GM13976 (cell line): ENCODE measurements at regions of chr6 and their contacts with region 1.

Region 1: DNA sequence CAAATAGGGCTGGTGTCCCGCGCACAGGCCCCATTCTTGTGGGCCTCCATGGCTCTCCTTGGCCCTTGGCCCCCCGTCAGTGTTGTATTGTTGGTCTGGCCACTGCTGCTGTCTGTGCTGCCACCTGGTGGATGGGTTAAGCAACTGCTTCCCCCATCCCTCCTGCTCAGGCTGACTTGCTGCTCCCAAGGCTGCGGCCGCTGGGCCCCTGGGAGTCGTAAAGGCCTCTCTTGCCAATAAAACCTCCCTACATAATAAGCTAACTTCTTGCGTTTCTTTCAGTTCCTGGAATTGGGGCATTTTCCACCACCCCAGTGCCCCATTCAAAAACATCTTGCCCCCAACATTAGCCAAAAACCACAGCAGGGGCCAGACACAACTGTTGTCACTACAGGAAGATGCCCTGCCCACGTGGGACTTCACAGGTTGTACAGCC is 27.1 kb downstream of the CD83 start:
- DNase-seq: peak; percentile 87
- CTCF ChIP-seq: peak; percentile 92

Region 2: DNA sequence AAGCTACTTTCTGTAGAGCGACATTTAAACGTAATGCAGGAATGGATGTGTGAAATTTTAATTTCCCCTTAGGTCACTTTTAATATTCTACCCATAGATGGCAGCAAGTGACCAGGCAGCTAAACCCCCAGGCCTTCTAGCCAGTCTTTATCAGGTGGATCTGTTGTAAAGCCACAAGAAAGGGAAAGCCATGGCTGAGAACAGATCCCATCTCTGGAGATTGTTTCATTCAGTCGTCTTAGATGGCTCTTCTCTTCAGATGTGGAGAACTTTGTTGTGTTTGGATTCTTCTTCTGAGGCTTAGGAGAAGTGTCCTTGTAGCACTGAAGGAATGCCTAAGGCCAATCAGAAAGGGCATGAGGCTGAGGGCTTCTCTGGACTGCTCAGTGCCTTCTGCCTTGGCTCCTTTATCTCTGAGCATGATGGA is 235.7 kb before region 1 on chr6:
- in situ Hi-C with region 1: loop called (anchors 10 kb)
- DNase-seq: peak; percentile 73
- CTCF ChIP-seq: peak; percentile 68

Region 3: GRCh38 chr6:14452567-14453527 is 308.2 kb after region 1 on chr6:
- in situ Hi-C with region 1: no loop called
- DNase-seq: no peak
- CTCF ChIP-seq: no peak

Region 4: GRCh38 chr6:14533446-14533845 is 388.8 kb after region 1 on chr6:
- in situ Hi-C with region 1: no loop called
- DNase-seq: no peak
- CTCF ChIP-seq: no peak